ENCODE measurements at regions of chr4 and their contacts with region 1.

Region 1: GRCh38 chr4:110296892-110297291 is 98.5 kb upstream of the ELOVL6 start:
- DNase-seq: no peak
- H3K4me3 Mint-ChIP-seq: no peak overlapping the region
- H3K27ac Mint-ChIP-seq: no peak overlapping the region
- H3K4me1 Mint-ChIP-seq: peaks cover 13% of the 10 kb centered on the region
- H3K27me3 Mint-ChIP-seq: peaks cover 56% of the 10 kb centered on the region

Region 2: GRCh38 chr4:109947457-109947856 is 349.4 kb before region 1 on chr4:
- CTCF ChIA-PET with region 1: no interaction called
- intact Hi-C with region 1: loop called (anchors 1 kb)
- DNase-seq: no peak
- H3K4me3 Mint-ChIP-seq: no peak overlapping the region
- H3K27ac Mint-ChIP-seq: peak overlapping the region; percentile 65
- H3K4me1 Mint-ChIP-seq: peaks cover 27% of the 10 kb centered on the region
- H3K27me3 Mint-ChIP-seq: no peaks in the 10 kb centered on the region

Region 3: DNA sequence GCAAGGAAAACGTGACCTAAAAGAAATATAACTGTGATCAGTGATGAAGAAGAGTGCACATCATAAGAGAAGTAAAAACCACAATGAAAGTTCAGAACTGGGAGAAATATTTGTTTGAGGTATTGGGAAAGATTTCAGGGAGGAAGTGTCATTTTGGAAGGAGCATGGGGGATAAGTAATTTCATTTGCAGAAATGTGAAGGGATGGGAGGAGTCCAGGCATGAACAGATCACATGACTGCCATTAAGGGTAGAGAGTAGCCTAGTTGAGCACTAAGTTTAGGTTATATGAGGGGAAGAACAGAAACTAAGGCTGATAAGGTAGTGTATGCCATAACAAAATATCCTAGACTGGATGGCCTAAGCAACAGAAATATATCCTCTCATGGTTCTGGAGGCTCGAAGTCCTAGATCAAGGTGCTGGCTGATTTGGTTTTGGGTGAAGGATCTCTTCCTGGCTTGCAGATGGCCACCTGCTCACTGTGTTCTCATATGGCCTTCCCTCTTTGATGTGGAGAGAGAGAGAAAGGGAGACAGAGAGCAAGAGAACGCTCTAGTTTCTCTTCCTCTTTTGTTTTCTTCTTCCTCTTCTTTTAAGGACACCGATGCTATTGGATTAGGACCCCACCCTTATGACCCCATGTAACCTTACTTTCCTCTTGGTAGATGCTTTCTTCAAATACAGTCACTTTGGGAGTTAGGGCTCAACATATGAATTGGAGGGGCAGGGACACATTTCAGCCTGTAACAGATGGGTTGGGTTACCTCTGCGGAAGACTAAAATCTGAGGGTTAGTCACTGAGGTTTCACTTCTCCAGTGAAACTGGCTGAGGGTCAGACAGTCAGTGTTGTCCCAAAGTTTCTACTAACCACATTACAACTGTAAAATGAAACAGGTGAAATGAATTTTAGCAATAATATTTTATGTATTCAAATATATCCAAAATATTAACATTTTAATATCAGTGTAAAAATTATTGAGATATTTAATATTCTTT is 306.3 kb before region 1 on chr4:
- CTCF ChIA-PET with region 1: no interaction called
- intact Hi-C with region 1: no loop called
- DNase-seq: no peak
- H3K4me3 Mint-ChIP-seq: no peak overlapping the region
- H3K27ac Mint-ChIP-seq: no peak overlapping the region
- H3K4me1 Mint-ChIP-seq: peaks cover 8% of the 10 kb centered on the region
- H3K27me3 Mint-ChIP-seq: peaks cover 19% of the 10 kb centered on the region

Region 4: GRCh38 chr4:110005461-110006056 is 291.3 kb before region 1 on chr4:
- CTCF ChIA-PET with region 1: interaction called, 3 read pairs
- intact Hi-C with region 1: loop called (anchors 5 kb)
- DNase-seq: no peak
- H3K4me3 Mint-ChIP-seq: no peak overlapping the region
- H3K27ac Mint-ChIP-seq: no peak overlapping the region
- H3K4me1 Mint-ChIP-seq: peaks cover 8% of the 10 kb centered on the region
- H3K27me3 Mint-ChIP-seq: peaks cover 3% of the 10 kb centered on the region

Region 5: GRCh38 chr4:110049951-110050925 is 246.7 kb before region 1 on chr4:
- CTCF ChIA-PET with region 1: interaction called, 3 read pairs
- intact Hi-C with region 1: loop called (anchors 5 kb)
- DNase-seq: peak; percentile 71
- H3K4me3 Mint-ChIP-seq: no peak overlapping the region
- H3K27ac Mint-ChIP-seq: no peak overlapping the region
- H3K4me1 Mint-ChIP-seq: no peaks in the 10 kb centered on the region
- H3K27me3 Mint-ChIP-seq: no peaks in the 10 kb centered on the region

Region 6: GRCh38 chr4:110087070-110087708 is 209.7 kb before region 1 on chr4:
- CTCF ChIA-PET with region 1: interaction called, 3 read pairs
- intact Hi-C with region 1: loop called (anchors 2 kb)
- DNase-seq: no peak
- H3K4me3 Mint-ChIP-seq: no peak overlapping the region
- H3K27ac Mint-ChIP-seq: peak overlapping the region; percentile 18
- H3K4me1 Mint-ChIP-seq: peaks cover 56% of the 10 kb centered on the region
- H3K27me3 Mint-ChIP-seq: no peaks in the 10 kb centered on the region

Region 7: GRCh38 chr4:110165382-110166285 is 131.3 kb before region 1 on chr4:
- CTCF ChIA-PET with region 1: no interaction called
- intact Hi-C with region 1: loop called (anchors 1 kb)
- DNase-seq: peak; percentile 85
- H3K4me3 Mint-ChIP-seq: peak overlapping the region; percentile 54
- H3K27ac Mint-ChIP-seq: peak overlapping the region; percentile 95
- H3K4me1 Mint-ChIP-seq: peaks cover 35% of the 10 kb centered on the region
- H3K27me3 Mint-ChIP-seq: no peaks in the 10 kb centered on the region

Region 8: DNA sequence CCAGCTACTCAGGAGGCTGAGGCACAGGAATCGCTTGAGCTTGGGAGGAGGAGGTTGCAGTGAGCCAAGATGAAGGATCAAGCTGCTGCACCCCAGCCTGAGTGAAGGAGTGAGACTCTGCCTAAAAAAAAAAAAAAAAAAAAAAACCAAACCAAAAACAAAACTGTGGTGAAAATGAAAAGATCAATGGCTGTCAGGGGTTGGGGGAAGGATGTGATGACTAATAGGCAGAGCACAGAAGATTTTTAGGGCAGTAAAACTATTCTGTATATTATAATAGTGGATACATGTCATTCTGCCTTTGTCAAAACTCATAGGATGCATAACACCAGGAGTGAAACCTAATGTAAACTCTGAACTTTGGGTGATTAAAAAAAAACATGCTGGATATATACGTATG is 28.5 kb before region 1 on chr4:
- CTCF ChIA-PET with region 1: no interaction called
- intact Hi-C with region 1: loop called (anchors 1 kb)
- DNase-seq: peak; percentile 33
- H3K4me3 Mint-ChIP-seq: no peak overlapping the region
- H3K27ac Mint-ChIP-seq: no peak overlapping the region
- H3K4me1 Mint-ChIP-seq: peaks cover 3% of the 10 kb centered on the region
- H3K27me3 Mint-ChIP-seq: peaks cover 5% of the 10 kb centered on the region

Region 9: DNA sequence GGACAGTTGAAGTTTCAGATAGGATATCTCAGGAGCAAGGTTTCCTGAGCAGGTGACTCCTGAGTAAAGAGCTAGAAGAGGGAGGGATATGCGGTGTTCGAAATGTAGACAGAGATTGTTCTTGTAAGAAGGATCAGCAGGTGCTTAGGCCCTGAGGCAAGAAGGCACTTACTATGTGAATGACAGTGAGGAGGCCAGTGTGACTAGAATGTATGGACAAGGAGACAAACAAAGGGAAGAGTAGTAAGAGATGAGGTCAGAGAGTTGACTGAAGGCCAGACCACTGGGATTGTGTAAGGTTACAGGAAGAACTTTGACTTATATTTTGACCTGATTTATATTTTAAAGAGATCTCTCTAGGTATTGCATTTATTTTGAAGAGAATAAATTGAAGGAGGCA is 60.6 kb after region 1 on chr4:
- CTCF ChIA-PET with region 1: no interaction called
- intact Hi-C with region 1: no loop called
- DNase-seq: no peak
- H3K4me3 Mint-ChIP-seq: no peak overlapping the region
- H3K27ac Mint-ChIP-seq: no peak overlapping the region
- H3K4me1 Mint-ChIP-seq: no peaks in the 10 kb centered on the region
- H3K27me3 Mint-ChIP-seq: peaks cover 6% of the 10 kb centered on the region

Measured in activated naive CD4-positive, alpha-beta T cell treated with anti-CD3 and anti-CD28 coated beads for 36 hours (primary cell).